Breast epithelium (tissue), 4 donors: ENCODE measurements at regions of chr11 and their contacts with region 1.

Region 1: DNA sequence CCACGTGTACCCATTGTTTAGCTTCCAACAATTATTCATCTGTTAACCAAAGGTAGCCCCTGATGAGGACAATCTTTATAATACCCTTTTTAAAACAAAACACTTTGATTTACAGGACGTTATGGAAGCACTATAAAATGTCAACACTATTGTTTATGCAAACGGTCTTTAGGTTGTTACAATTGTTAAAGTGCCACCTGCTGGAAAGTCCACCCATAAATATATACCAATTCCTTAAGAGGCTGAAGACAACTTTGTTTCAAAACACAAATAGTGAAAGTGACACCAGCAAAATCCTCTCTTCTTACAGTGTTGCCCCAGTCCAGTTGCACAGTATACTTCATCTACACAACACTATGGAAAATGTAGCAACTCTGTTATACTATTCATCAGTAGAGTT is 68.9 kb upstream of the SLN start:
- DNase-seq: no peak
- H3K4me3 ChIP-seq: no peak overlapping the region
- H3K27ac ChIP-seq: no peak overlapping the region
- H3K4me1 ChIP-seq: no peaks in the 10 kb centered on the region
- H3K27me3 ChIP-seq: no peaks in the 10 kb centered on the region
- CTCF ChIP-seq: no peak
- POLR2A ChIP-seq: no peak

Region 2: GRCh38 chr11:107719557-107720302 is 61.0 kb before region 1 on chr11:
- intact Hi-C with region 1: loop called (anchors 2 kb)
- DNase-seq: no peak
- H3K4me3 ChIP-seq: no peak overlapping the region
- H3K27ac ChIP-seq: peak overlapping the region in 1 of 2 donors; percentile 19
- H3K4me1 ChIP-seq: no peaks in the 10 kb centered on the region
- H3K27me3 ChIP-seq: no peaks in the 10 kb centered on the region
- CTCF ChIP-seq: no peak
- POLR2A ChIP-seq: no peak

Region 3: GRCh38 chr11:107741044-107741823 is 39.5 kb before region 1 on chr11:
- intact Hi-C with region 1: no loop called
- DNase-seq: no peak
- H3K4me3 ChIP-seq: no peak overlapping the region
- H3K27ac ChIP-seq: no peak overlapping the region
- H3K4me1 ChIP-seq: no peaks in the 10 kb centered on the region
- H3K27me3 ChIP-seq: no peaks in the 10 kb centered on the region
- CTCF ChIP-seq: peak in 1 of 3 donors; percentile 10
- POLR2A ChIP-seq: no peak

Region 4: GRCh38 chr11:107858217-107859070 is 77.7 kb after region 1 on chr11 and contains the start of gene SLC35F2:
- intact Hi-C with region 1: no loop called
- DNase-seq: peak; percentile 24 to 58
- H3K4me3 ChIP-seq: peak within 1 kb of the TSS; percentile 74 to 90 (median 79)
- H3K27ac ChIP-seq: peak within 1 kb of the TSS; percentile 72 to 81
- H3K4me1 ChIP-seq: peaks cover 0 to 2% of the 10 kb centered on the region in 2 donors
- H3K27me3 ChIP-seq: no peaks in the 10 kb centered on the region
- CTCF ChIP-seq: peak in 1 of 3 donors; percentile 10
- POLR2A ChIP-seq: no peak
- total RNA-seq, gene SLC35F2: 5.7 to 6.9 (median 5.8) TPM